Activated T-helper 2 cell treated with anti-CD3 and anti-CD28 coated beads, Interferon-gamma antibody, Interleukin-2, Interleukin-4, amounts not matched to agents 10 μg/mL and 5 μg/mL and 100 μg/mL, durations not matched to agents 14 hours and 24 hours and 36 hours (primary cell): ENCODE measurements at regions of chr4 and their contacts with region 1.

Region 1: DNA sequence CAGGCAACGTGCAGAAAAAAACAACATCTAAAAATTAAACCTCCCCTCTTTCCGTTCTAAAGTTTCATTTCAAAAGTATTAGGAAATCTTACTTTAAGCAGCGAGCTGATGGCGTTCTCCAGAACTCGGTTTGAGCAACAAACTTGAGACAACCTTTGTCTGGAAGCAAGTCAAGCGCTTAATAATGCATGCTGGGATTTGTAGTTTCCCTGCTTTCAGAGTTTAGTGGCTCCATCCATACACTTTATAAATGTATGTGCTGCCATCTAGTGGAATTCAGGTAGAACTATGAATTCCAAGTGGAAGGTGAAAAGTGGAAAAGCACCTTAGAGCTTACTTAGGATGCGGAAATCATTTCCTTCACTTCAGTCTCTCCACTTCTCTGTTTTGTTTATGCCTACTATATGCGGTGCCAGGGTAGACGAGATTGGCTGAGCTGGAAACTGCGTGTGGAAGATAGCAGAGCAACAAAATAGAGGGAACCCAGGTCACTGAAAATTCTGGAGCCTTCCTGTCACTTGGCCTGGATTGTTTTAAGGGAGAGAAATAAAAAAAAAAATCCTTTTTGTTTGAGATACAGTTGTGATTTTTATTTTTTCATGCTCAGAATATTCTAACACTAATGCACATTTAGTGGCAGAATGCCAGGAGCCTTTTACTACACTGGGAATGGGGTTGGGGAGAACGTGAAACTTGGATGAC is at the start of gene BDH2:
- DNase-seq: peak; percentile 31
- H3K4me3 Mint-ChIP-seq: peak within 1 kb of the TSS; percentile 85
- H3K27ac Mint-ChIP-seq: peak within 1 kb of the TSS; percentile 85
- H3K4me1 Mint-ChIP-seq: peaks cover 20% of the 10 kb centered on the region
- H3K27me3 Mint-ChIP-seq: no peaks in the 10 kb centered on the region
- total RNA-seq, gene BDH2: 16.0 and 16.3 TPM in 2 replicates

Region 2: DNA sequence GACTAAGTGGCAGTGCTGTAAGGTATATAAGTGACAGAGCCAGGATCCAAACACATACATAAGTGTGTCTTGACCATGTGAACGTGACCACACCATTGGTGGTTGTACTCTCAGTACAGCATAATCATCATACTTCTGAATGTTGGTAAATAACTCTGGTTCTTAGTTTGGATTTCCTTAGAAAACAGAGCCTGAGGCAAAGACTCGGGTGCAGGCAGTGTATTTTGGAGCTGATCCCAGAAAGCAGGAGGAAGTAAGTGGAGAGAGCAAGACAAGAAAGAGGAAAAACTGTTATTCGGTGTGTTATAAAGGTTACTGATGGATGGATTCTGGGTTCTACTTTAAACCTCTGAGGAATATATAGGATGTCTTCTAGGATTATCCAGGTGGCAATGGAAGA is 882.5 kb before region 1 on chr4:
- intact Hi-C with region 1: no loop called
- DNase-seq: no peak
- H3K4me3 Mint-ChIP-seq: no peak overlapping the region
- H3K27ac Mint-ChIP-seq: no peak overlapping the region
- H3K4me1 Mint-ChIP-seq: no peaks in the 10 kb centered on the region
- H3K27me3 Mint-ChIP-seq: peaks cover 8% of the 10 kb centered on the region

Region 3: GRCh38 chr4:102760645-102761295 is 339.1 kb before region 1 on chr4 and contains the start of gene MANBA:
- intact Hi-C with region 1: loop called (anchors 5 kb)
- DNase-seq: peak; percentile 79
- H3K4me3 Mint-ChIP-seq: peak within 1 kb of the TSS; percentile 95
- H3K27ac Mint-ChIP-seq: peak within 1 kb of the TSS; percentile 84
- H3K4me1 Mint-ChIP-seq: peaks cover 33% of the 10 kb centered on the region
- H3K27me3 Mint-ChIP-seq: peaks cover 19% of the 10 kb centered on the region
- total RNA-seq, gene MANBA: 9.4 and 11.3 TPM in 2 replicates

Region 4: DNA sequence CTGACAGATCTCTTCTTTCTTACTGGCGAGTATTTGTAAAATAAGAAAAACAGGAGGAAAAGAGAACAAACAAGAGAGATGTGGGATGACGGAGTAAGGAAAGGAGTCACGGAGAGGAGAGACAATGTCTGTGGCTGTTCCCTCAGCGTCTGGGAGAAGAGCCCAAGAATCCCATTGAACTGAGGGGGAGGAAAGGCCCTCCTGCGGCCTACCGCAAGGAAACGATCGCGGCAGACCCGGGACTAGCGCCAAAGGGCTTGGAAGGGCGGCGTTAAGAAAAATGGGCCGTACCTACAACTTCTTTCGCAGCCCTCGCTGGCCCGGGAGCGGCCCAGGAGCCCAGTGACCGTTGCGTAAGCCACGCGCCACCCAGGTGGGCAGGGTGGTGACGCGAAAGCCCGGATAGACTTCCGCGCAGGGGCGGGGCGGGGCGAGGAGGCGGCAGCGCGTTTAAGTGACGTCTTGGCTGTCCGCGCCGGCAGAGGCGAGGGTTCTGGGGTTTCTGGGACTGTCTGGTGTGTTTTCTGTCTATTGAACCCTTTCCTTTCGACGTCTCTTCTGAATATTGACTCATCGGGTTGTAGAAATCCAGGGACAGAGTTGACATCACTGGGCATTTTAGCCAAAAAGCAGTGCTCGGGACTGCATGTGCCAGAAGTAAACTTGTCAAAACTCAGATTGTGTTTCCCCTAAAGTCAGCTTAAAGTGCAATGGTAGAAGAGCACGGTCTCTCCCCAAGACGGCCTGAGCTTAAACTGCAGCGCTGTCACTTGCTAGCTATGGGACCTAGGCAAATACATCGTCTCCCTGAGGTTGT is 80.3 kb before region 1 on chr4 and contains the start of gene SLC9B1:
- intact Hi-C with region 1: loop called (anchors 1 kb)
- DNase-seq: peak; percentile 92
- H3K4me3 Mint-ChIP-seq: peak within 1 kb of the TSS; percentile 87
- H3K27ac Mint-ChIP-seq: peak within 1 kb of the TSS; percentile 94
- H3K4me1 Mint-ChIP-seq: peaks cover 18% of the 10 kb centered on the region
- H3K27me3 Mint-ChIP-seq: no peaks in the 10 kb centered on the region
- total RNA-seq, gene SLC9B1: 0.28 and 0.57 TPM in 2 replicates

Region 5: GRCh38 chr4:103046416-103047290 is 53.2 kb before region 1 on chr4:
- intact Hi-C with region 1: loop called (anchors 2 kb)
- DNase-seq: no peak
- H3K4me3 Mint-ChIP-seq: no peak overlapping the region
- H3K27ac Mint-ChIP-seq: no peak overlapping the region
- H3K4me1 Mint-ChIP-seq: peaks cover 18% of the 10 kb centered on the region
- H3K27me3 Mint-ChIP-seq: no peaks in the 10 kb centered on the region

Region 6: DNA sequence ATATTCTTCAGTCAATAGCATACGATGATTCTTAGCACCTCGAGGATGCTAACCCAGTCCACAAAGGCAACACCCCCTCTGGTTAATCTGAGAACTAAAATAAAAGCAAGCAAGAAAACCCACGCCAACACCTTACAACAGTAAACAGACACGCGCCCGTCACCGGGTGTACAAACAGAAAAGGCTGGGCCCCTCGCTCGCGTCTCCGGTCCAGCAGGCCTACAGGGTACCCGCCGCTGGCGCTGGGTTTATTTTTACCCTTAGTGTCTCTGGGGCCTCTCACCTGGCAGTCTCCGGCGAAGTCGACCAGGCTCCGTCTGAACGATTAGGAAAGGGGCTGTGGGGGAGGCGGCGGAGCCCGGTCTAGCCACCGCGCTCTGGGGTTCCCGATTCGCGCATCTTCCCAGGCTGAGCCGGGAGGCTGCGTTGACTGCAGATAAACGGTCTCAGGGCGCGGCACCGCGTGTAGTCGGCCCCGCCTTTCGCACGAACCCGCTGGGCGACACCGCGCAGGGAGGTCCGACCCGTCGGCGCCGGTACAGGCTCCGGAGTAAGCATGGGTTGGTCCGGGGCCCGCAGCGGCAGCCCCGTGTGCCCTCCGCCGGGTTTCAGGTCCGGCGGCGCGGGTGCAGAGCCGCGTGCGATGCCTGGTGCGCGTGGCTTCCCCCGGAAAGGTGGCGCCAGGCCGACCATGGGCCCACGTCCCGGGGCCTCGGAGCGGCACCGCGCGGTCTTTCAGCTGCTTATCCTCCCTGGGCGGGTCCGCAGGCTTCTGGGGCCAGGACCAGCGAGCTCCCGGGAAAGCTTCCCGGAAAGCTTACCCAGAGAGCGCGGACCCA is 23.7 kb before region 1 on chr4:
- intact Hi-C with region 1: loop called (anchors 1 kb)
- DNase-seq: peak; percentile 66
- H3K4me3 Mint-ChIP-seq: peak overlapping the region; percentile 90
- H3K27ac Mint-ChIP-seq: peak overlapping the region; percentile 98
- H3K4me1 Mint-ChIP-seq: peaks cover 45% of the 10 kb centered on the region
- H3K27me3 Mint-ChIP-seq: no peaks in the 10 kb centered on the region